SK-N-SH (cell line): ENCODE measurements at regions of chr4 and their contacts with region 1.

Region 1: GRCh38 chr4:95522682-95523530 is 25.9 kb downstream of the UNC5C start:
- DNase-seq: no peak
- H3K4me3 ChIP-seq: no peak overlapping the region
- H3K27ac ChIP-seq: peak overlapping the region in 1 of 2 experiments; percentile 99; a peak in 2 of 4 replicates
- H3K4me1 ChIP-seq: peaks cover 8 to 54% of the 10 kb centered on the region in 2 experiments; a peak in 2 of 4 replicates
- H3K27me3 ChIP-seq: no peaks in the 10 kb centered on the region
- CTCF ChIP-seq: no peak
- EP300 ChIP-seq: no peak
- RAD21 ChIP-seq: no peak

Region 2: DNA sequence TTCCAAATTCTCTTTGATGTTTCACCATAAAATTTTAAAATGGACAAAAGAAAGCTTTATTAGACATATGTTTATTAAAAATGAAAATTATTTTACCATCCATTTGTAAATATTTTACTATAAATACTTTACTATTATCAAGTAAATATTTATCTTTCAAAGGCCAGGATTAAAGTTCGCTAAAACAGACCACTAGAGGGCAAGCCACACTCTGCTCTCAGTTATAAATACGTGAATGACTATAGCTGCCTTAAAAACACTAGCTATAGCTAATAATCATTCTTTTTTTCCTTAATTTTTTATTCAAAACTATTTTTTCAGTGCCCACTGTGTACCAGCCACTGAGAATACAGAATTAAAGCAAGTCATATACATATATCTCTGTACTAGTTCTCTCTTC is 12.8 kb before region 1 on chr4:
- CTCF ChIA-PET with region 1: interaction called, 10 read pairs
- POLR2A ChIA-PET with region 1: no interaction called
- DNase-seq: no peak
- H3K4me3 ChIP-seq: no peak overlapping the region
- H3K27ac ChIP-seq: peak overlapping the region; percentile 18 to 96; a peak in 3 of 4 replicates
- H3K4me1 ChIP-seq: peaks cover 13 to 54% of the 10 kb centered on the region in 2 experiments; a peak in 3 of 4 replicates
- H3K27me3 ChIP-seq: no peaks in the 10 kb centered on the region
- CTCF ChIP-seq: peak; percentile 74
- EP300 ChIP-seq: no peak
- RAD21 ChIP-seq: peak; percentile 80

Region 3: GRCh38 chr4:95544113-95545103 is 21.5 kb after region 1 on chr4:
- CTCF ChIA-PET with region 1: interaction called, 114 read pairs
- POLR2A ChIA-PET with region 1: interaction called, 29 read pairs
- DNase-seq: no peak
- H3K4me3 ChIP-seq: peak overlapping the region; percentile 10 to 95; a peak in 3 of 4 replicates
- H3K27ac ChIP-seq: peak overlapping the region; percentile 59 to 98
- H3K4me1 ChIP-seq: peaks cover 0 to 15% of the 10 kb centered on the region in 2 experiments; a peak in 1 of 4 replicates
- H3K27me3 ChIP-seq: no peaks in the 10 kb centered on the region
- CTCF ChIP-seq: peak; percentile 57
- EP300 ChIP-seq: 0 out of 4 replicates have a peak, but pooled peaks of 1 of the 2 experiments have one; percentile 41
- RAD21 ChIP-seq: peak; percentile 68

Region 4: DNA sequence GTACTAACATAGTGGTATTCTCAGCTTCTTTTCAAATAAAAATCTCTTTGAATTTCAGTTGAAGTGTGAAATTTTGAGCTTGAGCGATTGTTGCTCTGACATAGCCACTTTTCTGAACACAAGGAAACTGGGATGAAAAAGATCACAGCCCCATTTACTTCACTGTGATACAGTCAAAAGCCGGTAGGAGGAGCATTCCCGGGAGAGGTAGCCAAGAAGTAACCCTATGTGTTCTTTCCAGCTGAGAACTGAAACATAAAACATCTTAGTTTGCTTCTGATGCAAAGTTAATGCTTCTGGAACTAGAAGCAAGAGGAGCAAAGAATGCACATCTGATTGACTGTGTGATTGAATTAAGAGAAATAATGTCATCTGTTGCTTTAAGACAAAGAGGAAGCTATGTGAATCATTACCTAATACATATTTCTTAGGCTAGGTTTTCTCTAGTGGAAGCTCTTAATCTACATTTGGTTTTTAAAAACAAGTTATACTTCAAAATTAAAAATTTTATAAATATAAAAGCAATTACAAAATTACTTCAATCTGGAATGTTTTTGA is 114.2 kb after region 1 on chr4:
- CTCF ChIA-PET with region 1: no interaction called
- POLR2A ChIA-PET with region 1: no interaction called
- DNase-seq: peak; percentile 42
- H3K4me3 ChIP-seq: peak overlapping the region in 1 of 2 experiments; percentile 30; a peak in 1 of 4 replicates
- H3K27ac ChIP-seq: peak overlapping the region in 1 of 2 experiments; percentile 9; a peak in 1 of 4 replicates
- H3K4me1 ChIP-seq: peaks cover 4 to 5% of the 10 kb centered on the region in 2 experiments; a peak in 2 of 4 replicates
- H3K27me3 ChIP-seq: no peaks in the 10 kb centered on the region
- CTCF ChIP-seq: peak; percentile 65
- EP300 ChIP-seq: no peak
- RAD21 ChIP-seq: peak; percentile 52